ENCODE measurements at regions of chr17 and their contacts with region 1.

Region 1: GRCh38 chr17:29777663-29778062 is 152.4 kb downstream of the SSH2 start:
- DNase-seq: no peak
- ATAC-seq: no peak
- H3K4me3 ChIP-seq: no peak overlapping the region
- H3K27ac ChIP-seq: no peak overlapping the region
- H3K4me1 ChIP-seq: no peaks in the 10 kb centered on the region
- H3K27me3 ChIP-seq: no peaks in the 10 kb centered on the region
- CTCF ChIP-seq: no peak
- EP300 ChIP-seq: no peak
- POLR2A ChIP-seq: no peak
- RAD21 ChIP-seq: no peak

Region 2: GRCh38 chr17:29579866-29580771 is 197.5 kb before region 1 on chr17:
- CTCF ChIA-PET with region 1: interaction called, 9 read pairs
- POLR2A ChIA-PET with region 1: no interaction called
- RAD21 ChIA-PET with region 1: interaction called, 4 read pairs
- SMC1A ChIA-PET with region 1: interaction called, 14 read pairs
- in situ Hi-C with region 1: no loop called
- intact Hi-C with region 1: loop called (anchors 2 kb)
- DNase-seq: no peak
- ATAC-seq: peak; percentile 100
- H3K4me3 ChIP-seq: no peak overlapping the region
- H3K27ac ChIP-seq: no peak overlapping the region; the same call in 1 of the 2 replicates
- H3K4me1 ChIP-seq: peaks cover 11% of the 10 kb centered on the region
- H3K27me3 ChIP-seq: no peaks in the 10 kb centered on the region
- CTCF ChIP-seq: peak; percentile 82 to 93 (median 89)
- EP300 ChIP-seq: no peak
- POLR2A ChIP-seq: no peak
- RAD21 ChIP-seq: peak; percentile 87

Region 3: GRCh38 chr17:29640413-29640812 is 137.2 kb before region 1 on chr17:
- CTCF ChIA-PET with region 1: interaction called, 112 read pairs
- POLR2A ChIA-PET with region 1: interaction called, 6 read pairs
- RAD21 ChIA-PET with region 1: interaction called, 133 read pairs
- SMC1A ChIA-PET with region 1: interaction called, 94 read pairs
- in situ Hi-C with region 1: loop called (anchors 5 kb)
- intact Hi-C with region 1: loop called (anchors 1 kb)
- DNase-seq: no peak
- ATAC-seq: no peak
- H3K4me3 ChIP-seq: no peak overlapping the region
- H3K27ac ChIP-seq: no peak overlapping the region
- H3K4me1 ChIP-seq: peaks cover 3% of the 10 kb centered on the region
- H3K27me3 ChIP-seq: no peaks in the 10 kb centered on the region
- CTCF ChIP-seq: no peak
- EP300 ChIP-seq: no peak
- POLR2A ChIP-seq: no peak
- RAD21 ChIP-seq: no peak

Region 4: DNA sequence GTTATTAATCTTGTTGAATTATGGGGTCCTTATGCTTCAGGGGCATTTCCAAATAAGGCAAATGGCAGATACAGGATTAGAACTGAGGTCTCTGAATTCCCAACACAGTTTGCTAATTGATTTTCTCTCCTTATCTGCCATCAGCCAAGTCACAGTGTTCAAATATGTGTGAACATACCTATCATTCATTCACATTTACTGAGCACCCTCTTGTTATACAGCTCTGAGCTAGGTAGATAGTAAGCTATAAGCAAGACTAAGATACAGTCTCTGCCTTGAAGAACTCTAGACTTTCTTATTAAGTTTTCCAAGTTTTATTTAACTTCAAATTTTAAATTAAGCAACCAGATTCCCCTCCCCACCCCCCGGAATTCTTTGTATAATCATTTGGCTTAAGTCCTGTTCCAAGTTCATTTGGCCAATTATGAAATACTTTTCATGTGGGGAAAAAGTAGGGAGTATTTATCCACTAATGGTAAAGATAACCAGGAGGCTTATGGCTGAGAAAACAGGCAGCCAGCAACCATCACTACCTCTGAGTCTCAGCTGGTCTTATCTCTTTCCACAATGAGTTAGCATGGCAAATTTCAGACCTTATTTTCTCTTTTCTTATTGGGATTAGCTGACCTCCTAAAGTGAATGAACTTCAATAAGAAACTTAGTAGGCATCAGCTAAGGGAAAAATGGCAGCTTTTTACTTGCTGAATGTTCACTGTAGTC is 123.5 kb before region 1 on chr17:
- CTCF ChIA-PET with region 1: interaction called, 11 read pairs
- POLR2A ChIA-PET with region 1: interaction called, 11 read pairs
- RAD21 ChIA-PET with region 1: interaction called, 7 read pairs
- SMC1A ChIA-PET with region 1: interaction called, 8 read pairs
- in situ Hi-C with region 1: no loop called
- intact Hi-C with region 1: no loop called
- DNase-seq: no peak
- ATAC-seq: no peak
- H3K4me3 ChIP-seq: no peak overlapping the region
- H3K27ac ChIP-seq: no peak overlapping the region
- H3K4me1 ChIP-seq: no peaks in the 10 kb centered on the region
- H3K27me3 ChIP-seq: no peaks in the 10 kb centered on the region
- CTCF ChIP-seq: no peak
- EP300 ChIP-seq: no peak
- POLR2A ChIP-seq: no peak
- RAD21 ChIP-seq: no peak

Region 5: GRCh38 chr17:29682054-29682453 is 95.6 kb before region 1 on chr17:
- CTCF ChIA-PET with region 1: interaction called, 34 read pairs
- POLR2A ChIA-PET with region 1: no interaction called
- RAD21 ChIA-PET with region 1: interaction called, 15 read pairs
- SMC1A ChIA-PET with region 1: interaction called, 55 read pairs
- in situ Hi-C with region 1: no loop called
- intact Hi-C with region 1: loop called (anchors 5 kb)
- DNase-seq: no peak
- ATAC-seq: peak; percentile 91
- H3K4me3 ChIP-seq: no peak overlapping the region
- H3K27ac ChIP-seq: peak overlapping the region; percentile 53; the same call in 1 of the 2 replicates
- H3K4me1 ChIP-seq: 0 out of 2 replicates have a peak, but pooled peaks cover 4% of the 10 kb centered on the region
- H3K27me3 ChIP-seq: no peaks in the 10 kb centered on the region
- CTCF ChIP-seq: peak; percentile 5 to 22 (median 12); a peak in 1 of 6 replicates
- EP300 ChIP-seq: no peak
- POLR2A ChIP-seq: no peak
- RAD21 ChIP-seq: peak; percentile 32

Region 6: GRCh38 chr17:29699283-29699682 is 78.4 kb before region 1 on chr17:
- CTCF ChIA-PET with region 1: interaction called, 23 read pairs
- POLR2A ChIA-PET with region 1: no interaction called
- RAD21 ChIA-PET with region 1: interaction called, 4 read pairs
- SMC1A ChIA-PET with region 1: interaction called, 38 read pairs
- in situ Hi-C with region 1: no loop called
- intact Hi-C with region 1: no loop called
- DNase-seq: no peak
- ATAC-seq: no peak
- H3K4me3 ChIP-seq: no peak overlapping the region
- H3K27ac ChIP-seq: no peak overlapping the region
- H3K4me1 ChIP-seq: peaks cover under 1% of the 10 kb centered on the region; the same call in 1 of the 2 replicates
- H3K27me3 ChIP-seq: no peaks in the 10 kb centered on the region
- CTCF ChIP-seq: no peak
- EP300 ChIP-seq: no peak
- POLR2A ChIP-seq: no peak
- RAD21 ChIP-seq: no peak

Region 7: DNA sequence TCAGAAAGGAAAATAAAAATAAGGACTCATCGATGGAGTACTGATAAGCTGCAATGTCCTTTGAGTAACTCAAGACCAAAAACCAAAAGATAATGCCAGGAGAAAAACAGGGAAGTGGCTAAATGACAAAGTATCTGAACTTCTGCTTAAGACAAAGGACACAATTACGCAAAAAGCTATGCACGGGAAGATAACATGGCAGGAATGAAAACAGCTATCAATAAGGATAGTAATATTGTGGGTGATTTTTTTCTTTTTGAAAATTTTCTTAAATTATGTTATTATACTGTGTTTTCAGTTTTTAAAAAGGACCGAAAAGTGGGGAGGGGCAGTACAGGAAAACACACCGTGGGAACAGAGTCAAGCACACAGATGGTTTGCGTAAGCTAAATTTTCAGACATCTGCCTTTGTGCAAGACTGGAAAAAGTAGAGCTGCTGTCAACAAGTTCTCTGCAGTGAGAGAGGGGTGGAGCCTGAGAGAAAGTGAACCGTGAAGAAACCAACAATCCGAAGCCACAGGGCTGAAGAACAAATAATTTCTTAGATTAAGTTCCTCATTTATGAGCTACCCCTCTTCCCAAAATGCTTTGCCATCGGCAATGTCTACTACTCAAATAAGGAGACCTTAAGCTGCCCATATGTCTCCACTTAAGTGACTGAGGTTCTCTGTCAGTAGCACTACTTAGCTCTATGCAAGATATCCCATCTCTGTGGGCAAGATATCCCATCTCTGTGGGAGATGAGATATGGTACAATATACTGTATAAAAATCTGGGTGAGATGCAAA is 55.1 kb before region 1 on chr17:
- CTCF ChIA-PET with region 1: interaction called, 25 read pairs
- POLR2A ChIA-PET with region 1: no interaction called
- RAD21 ChIA-PET with region 1: interaction called, 21 read pairs
- SMC1A ChIA-PET with region 1: interaction called, 50 read pairs
- in situ Hi-C with region 1: no loop called
- intact Hi-C with region 1: no loop called
- DNase-seq: peak; percentile 96
- ATAC-seq: peak; percentile 86
- H3K4me3 ChIP-seq: peak overlapping the region; percentile 53; the same call in 1 of the 2 replicates
- H3K27ac ChIP-seq: peak overlapping the region; percentile 94
- H3K4me1 ChIP-seq: peaks cover 62% of the 10 kb centered on the region
- H3K27me3 ChIP-seq: no peaks in the 10 kb centered on the region
- CTCF ChIP-seq: no peak
- EP300 ChIP-seq: peak; percentile 33 to 67; a peak in 3 of 4 replicates
- POLR2A ChIP-seq: peak; percentile 65
- RAD21 ChIP-seq: no peak; the same call in 1 of the 2 replicates